HEK293 (cell line): ENCODE measurements at regions of chr2 and their contacts with region 1.

Region 1: DNA sequence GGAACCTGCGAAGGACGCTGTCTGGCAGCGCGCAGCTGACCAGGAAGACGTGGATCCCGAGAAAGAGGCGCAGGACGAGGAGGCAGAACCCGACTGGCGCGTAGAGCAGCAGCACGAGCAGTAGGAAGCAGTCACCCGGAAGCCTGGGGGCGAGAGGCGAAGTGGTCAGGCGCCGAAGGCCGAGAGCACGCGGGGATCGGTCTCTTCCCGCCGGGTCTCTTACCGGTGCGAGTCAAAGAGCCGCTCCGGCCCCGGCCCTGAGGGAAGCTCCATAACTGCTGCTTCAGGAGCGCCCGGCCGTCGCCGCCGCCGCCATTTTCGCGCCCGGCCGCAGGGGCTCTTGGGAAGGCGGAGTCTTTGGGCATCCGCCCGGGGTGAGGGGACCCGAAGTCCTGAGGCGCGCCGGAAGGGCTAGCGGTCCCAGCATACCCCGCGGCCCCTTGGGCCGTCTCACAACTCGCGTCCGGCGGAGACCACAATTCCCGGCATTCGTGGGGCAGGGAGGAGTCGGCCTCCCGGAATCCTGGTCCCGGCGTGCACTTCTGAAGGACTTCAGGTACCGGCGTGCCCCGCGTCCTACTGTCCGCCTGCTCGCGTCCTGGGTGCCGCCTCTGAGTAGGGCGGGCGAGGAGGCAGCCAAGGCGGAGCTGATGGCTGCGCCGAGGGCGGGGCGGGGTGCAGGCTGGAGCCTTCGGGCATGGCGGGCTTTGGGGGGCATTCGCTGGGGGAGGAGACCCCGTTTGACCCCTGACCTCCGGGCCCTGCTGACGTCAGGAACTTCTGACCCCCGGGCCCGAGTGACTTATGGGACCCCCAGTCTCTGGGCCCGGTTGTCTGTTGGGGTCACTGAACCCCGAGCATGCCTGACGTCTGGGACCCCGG is at the starts of genes AUP1 and HTRA2:
- H3K4me3 ChIP-seq: peak within 1 kb of the TSS; percentile 57
- H3K27ac ChIP-seq: peak within 1 kb of the TSS; percentile 72
- H3K4me1 ChIP-seq: no peaks in the 10 kb centered on the region; the same call in 1 of the 2 replicates
- CTCF ChIP-seq: no peak

Region 2: GRCh38 chr2:74507145-74507925 is 22.3 kb before region 1 on chr2 and contains the start of gene PCGF1:
- CTCF ChIA-PET with region 1: interaction called, 5 read pairs
- POLR2A ChIA-PET with region 1: interaction called, 18 read pairs
- H3K4me3 ChIP-seq: peak within 1 kb of the TSS; percentile 100
- H3K27ac ChIP-seq: peak within 1 kb of the TSS; percentile 96
- H3K4me1 ChIP-seq: peaks cover 4% of the 10 kb centered on the region; the same call in 1 of the 2 replicates
- CTCF ChIP-seq: peak; percentile 100